BJ (cell line): ENCODE measurements at regions of chr20 and their contacts with region 1.

Region 1: GRCh38 chr20:47529840-47530239 is 28.2 kb downstream of the NCOA3 start:
- DNase-seq: no peak
- H3K4me3 ChIP-seq: no peak overlapping the region
- H3K27me3 ChIP-seq: no peaks in the 10 kb centered on the region
- CTCF ChIP-seq: no peak

Region 2: GRCh38 chr20:47370850-47371676 is 158.8 kb before region 1 on chr20:
- CTCF ChIA-PET with region 1: no interaction called
- POLR2A ChIA-PET with region 1: no interaction called
- DNase-seq: no peak
- H3K4me3 ChIP-seq: no peak overlapping the region
- H3K27me3 ChIP-seq: no peaks in the 10 kb centered on the region
- CTCF ChIP-seq: no peak

Region 3: GRCh38 chr20:47501483-47502270 is 28.2 kb before region 1 on chr20 and contains the start of gene NCOA3:
- CTCF ChIA-PET with region 1: no interaction called
- POLR2A ChIA-PET with region 1: interaction called, 12 read pairs
- DNase-seq: peak; percentile 73
- H3K4me3 ChIP-seq: peak within 1 kb of the TSS; percentile 94
- H3K27me3 ChIP-seq: no peaks in the 10 kb centered on the region
- CTCF ChIP-seq: peak; percentile 49
- polyA plus RNA-seq, gene NCOA3: 23.6 and 32.0 TPM in 2 replicates

Region 4: DNA sequence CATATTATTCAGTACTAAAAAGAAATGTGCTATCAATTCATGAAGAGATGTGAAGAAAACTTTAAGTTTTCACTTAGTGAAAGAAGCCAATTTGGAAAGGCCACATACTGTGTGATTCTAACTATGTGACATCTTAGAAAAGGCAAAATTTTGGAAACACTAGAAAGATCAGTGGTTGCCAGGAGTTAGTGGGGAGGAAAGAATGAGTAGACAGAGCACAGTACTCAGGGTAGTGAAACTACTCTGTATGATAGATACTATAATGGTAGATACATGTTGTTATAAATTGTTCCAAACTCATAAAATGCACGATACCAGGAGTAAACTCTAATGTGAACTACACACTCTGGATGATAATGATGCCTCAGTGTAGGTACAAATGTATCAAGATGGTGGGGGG is 14.0 kb before region 1 on chr20:
- CTCF ChIA-PET with region 1: no interaction called
- POLR2A ChIA-PET with region 1: no interaction called
- DNase-seq: no peak
- H3K4me3 ChIP-seq: no peak overlapping the region
- H3K27me3 ChIP-seq: no peaks in the 10 kb centered on the region
- CTCF ChIP-seq: no peak

Region 5: GRCh38 chr20:47561180-47561579 is 31.3 kb after region 1 on chr20:
- CTCF ChIA-PET with region 1: no interaction called
- POLR2A ChIA-PET with region 1: no interaction called
- DNase-seq: no peak
- H3K4me3 ChIP-seq: no peak overlapping the region
- H3K27me3 ChIP-seq: no peaks in the 10 kb centered on the region
- CTCF ChIP-seq: no peak